ENCODE measurements at regions of chr10 and their contacts with region 1.

Region 1: GRCh38 chr10:89553064-89553734 is 17.8 kb upstream of the SLC16A12 start:
- DNase-seq: peak; percentile 41 to 81
- ATAC-seq: peak; percentile 70 to 83
- H3K4me3 ChIP-seq: no peak overlapping the region
- H3K27ac ChIP-seq: peak overlapping the region; percentile 62 to 83; a peak in 5 of 6 replicates
- H3K4me1 ChIP-seq: peaks cover 54% of the 10 kb centered on the region
- CTCF ChIP-seq: no peak
- EP300 ChIP-seq: peak in 1 of 2 experiments; percentile 37; a peak in 1 of 5 replicates
- POLR2A ChIP-seq: no peak
- RAD21 ChIP-seq: peak in 1 of 2 experiments; percentile 24; a peak in 1 of 5 replicates

Region 2: DNA sequence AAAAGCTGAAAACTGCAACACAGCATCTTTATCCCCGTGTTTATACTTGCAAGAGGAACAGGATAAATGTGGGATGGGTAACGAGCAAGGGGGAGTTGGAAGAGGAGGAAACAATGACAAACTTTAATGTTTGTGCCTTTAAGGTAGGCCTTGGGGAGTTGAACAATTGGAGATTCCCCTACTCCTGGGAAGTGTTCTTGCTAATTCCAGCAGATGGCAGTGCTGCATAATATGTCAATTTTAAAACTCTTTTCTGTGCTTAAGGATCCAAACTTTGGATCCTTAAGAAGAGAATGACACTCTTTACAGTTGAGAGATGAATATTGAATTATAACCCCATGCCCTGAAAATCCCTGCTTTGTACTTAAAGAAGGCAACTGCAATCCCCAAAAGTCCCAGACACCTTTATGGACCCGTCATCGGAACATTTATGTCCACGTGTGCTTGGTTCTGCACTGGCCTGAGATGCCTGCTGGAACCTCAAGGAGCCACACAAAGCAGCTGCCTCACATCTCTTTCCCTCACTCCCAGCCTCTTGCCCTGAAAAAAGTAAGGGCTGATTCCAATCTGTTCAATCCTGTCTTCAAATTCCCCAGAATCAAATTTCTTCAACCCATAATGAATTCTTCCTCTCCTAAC is 126.8 kb before region 1 on chr10:
- CTCF ChIA-PET with region 1: interaction called, 88 read pairs
- POLR2A ChIA-PET with region 1: no interaction called
- DNase-seq: peak; percentile 56 to 57
- ATAC-seq: peak; percentile 87 to 94
- H3K4me3 ChIP-seq: no peak overlapping the region
- H3K27ac ChIP-seq: peak overlapping the region in 1 of 2 experiments; percentile 1; a peak in 1 of 6 replicates
- H3K4me1 ChIP-seq: peaks cover 13% of the 10 kb centered on the region
- CTCF ChIP-seq: peak; percentile 93
- EP300 ChIP-seq: no peak
- POLR2A ChIP-seq: no peak
- RAD21 ChIP-seq: peak; percentile 95

Region 3: GRCh38 chr10:89466599-89467035 is 86.6 kb before region 1 on chr10:
- CTCF ChIA-PET with region 1: interaction called, 15 read pairs
- POLR2A ChIA-PET with region 1: no interaction called
- DNase-seq: peak in 1 of 2 experiments; percentile 53
- ATAC-seq: peak; percentile 93 to 97
- H3K4me3 ChIP-seq: no peak overlapping the region
- H3K27ac ChIP-seq: peak overlapping the region; percentile 17 to 26; a peak in 4 of 6 replicates
- H3K4me1 ChIP-seq: peaks cover 21% of the 10 kb centered on the region; the same call in 2 of the 3 replicates
- CTCF ChIP-seq: peak; percentile 49
- EP300 ChIP-seq: no peak
- POLR2A ChIP-seq: no peak
- RAD21 ChIP-seq: peak; percentile 65 to 70

Measured in A549 (cell line).